ENCODE measurements at regions of chr7 and their contacts with region 1.

Region 1: DNA sequence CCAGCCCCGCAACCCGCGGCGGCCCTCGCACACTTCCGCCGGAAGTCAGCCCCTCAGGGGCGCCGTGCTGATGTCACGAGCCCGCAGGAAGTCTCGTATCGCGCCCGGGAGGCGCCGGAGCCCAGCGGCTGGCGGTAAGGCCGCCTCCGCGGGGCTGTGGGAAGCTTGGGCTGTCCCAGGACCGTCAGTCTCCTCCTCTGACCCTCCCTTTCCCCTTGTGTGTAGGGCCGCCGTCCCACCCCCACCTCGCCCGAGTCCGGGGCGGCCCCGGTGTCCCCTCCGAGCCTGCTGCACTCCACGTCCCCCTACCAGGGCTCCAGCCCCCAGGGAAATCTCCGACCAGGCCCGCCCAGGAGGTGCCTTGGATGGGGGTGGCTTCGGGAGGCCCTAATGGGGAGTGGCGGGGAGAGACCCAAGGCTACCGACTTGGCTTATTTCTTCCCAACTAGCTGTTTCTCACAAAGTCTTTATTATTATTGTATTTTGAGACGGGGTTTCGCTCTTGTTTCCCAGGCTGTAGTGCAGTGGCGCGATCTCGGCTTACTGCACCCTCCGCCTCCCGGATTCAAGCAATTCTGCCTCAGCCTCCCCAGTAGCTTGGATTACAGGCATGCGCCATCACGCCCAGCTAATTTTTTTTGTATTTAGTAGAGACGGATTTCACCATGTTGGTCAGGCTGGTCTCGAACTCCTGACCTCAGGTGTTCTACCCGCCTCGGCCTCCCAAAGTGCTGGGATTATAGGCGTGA is at the start of gene ZDHHC4:
- DNase-seq: peak; percentile 92
- ATAC-seq: peak; percentile 97
- H3K4me3 Mint-ChIP-seq: peak within 1 kb of the TSS; percentile 85
- H3K27ac Mint-ChIP-seq: peak within 1 kb of the TSS; percentile 90
- H3K4me1 Mint-ChIP-seq: peaks cover 51% of the 10 kb centered on the region
- H3K27me3 Mint-ChIP-seq: no peaks in the 10 kb centered on the region
- total RNA-seq, gene ZDHHC4: 29.3 to 35.7 TPM

Region 2: DNA sequence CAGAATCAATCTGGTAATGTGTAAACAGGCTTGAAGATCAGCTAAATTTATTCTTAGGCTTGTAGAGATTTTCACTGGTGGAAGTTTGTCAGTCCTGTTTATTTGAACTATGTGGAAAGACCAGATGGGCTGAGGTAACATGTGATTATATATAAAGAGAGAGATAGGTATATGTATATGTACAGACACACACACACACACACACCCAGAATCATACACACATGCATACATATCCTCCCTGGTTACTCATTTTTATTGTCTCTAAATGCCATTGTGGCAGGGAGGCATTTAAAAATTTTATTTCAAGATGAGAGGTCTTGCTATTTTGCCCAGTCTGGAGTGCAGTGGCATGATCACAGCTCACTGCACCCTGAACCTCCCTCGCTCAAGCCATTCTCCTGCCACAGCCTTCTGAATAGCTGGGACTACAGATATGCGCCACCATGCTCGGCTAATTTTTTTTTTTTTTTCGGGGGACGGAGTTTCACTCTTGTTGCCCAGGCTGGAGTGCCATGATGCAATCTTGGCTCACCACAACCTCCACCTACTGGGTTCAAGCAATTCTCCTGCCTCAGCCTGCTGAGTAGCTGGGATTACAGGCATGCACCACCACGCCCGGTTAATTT is 227.0 kb before region 1 on chr7:
- CTCF ChIA-PET with region 1: no interaction called
- POLR2A ChIA-PET with region 1: no interaction called
- DNase-seq: no peak
- ATAC-seq: no peak
- H3K4me3 Mint-ChIP-seq: no peak overlapping the region
- H3K27ac Mint-ChIP-seq: no peak overlapping the region
- H3K4me1 Mint-ChIP-seq: peaks cover 6% of the 10 kb centered on the region
- H3K27me3 Mint-ChIP-seq: peaks cover 4% of the 10 kb centered on the region

Region 3: DNA sequence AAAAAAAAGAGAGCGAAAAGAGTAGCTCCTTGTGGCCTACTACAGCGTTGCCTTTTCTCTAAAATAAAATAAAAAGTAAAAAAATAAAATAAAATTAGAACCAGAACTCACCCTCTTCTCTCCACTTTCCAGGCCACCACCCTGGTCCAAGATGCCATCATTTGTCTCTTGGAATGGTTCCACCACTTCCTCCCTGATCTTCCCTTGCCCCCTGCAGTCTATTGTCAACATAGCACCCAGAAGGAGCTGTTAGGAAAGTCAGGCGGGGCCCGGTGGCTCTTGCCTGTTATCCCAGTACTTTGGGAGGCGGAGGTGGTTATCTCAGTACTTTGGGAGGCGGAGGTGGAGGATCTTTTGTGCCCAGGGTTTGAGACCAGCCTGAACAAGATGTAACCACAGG is 18.7 kb before region 1 on chr7:
- CTCF ChIA-PET with region 1: interaction called, 32 read pairs
- POLR2A ChIA-PET with region 1: interaction called, 5 read pairs
- DNase-seq: peak; percentile 34
- ATAC-seq: no peak
- H3K4me3 Mint-ChIP-seq: no peak overlapping the region
- H3K27ac Mint-ChIP-seq: no peak overlapping the region
- H3K4me1 Mint-ChIP-seq: peaks cover 9% of the 10 kb centered on the region
- H3K27me3 Mint-ChIP-seq: peaks cover 3% of the 10 kb centered on the region

Region 4: GRCh38 chr7:6589829-6590644 is 12.5 kb after region 1 on chr7 and contains the start of gene INTS15:
- CTCF ChIA-PET with region 1: interaction called, 18 read pairs
- POLR2A ChIA-PET with region 1: interaction called, 24 read pairs
- DNase-seq: peak; percentile 81
- ATAC-seq: peak; percentile 94
- H3K4me3 Mint-ChIP-seq: peak within 1 kb of the TSS; percentile 82
- H3K27ac Mint-ChIP-seq: peak within 1 kb of the TSS; percentile 86
- H3K4me1 Mint-ChIP-seq: peaks cover 20% of the 10 kb centered on the region
- H3K27me3 Mint-ChIP-seq: no peaks in the 10 kb centered on the region
- total RNA-seq, gene INTS15: 40.9 to 42.7 TPM

Region 5: GRCh38 chr7:6614953-6615722 is 37.6 kb after region 1 on chr7 and contains the start of gene ZNF853:
- CTCF ChIA-PET with region 1: no interaction called
- POLR2A ChIA-PET with region 1: no interaction called
- DNase-seq: no peak
- ATAC-seq: peak; percentile 49
- H3K4me3 Mint-ChIP-seq: peak within 1 kb of the TSS; percentile 59
- H3K27ac Mint-ChIP-seq: peak within 1 kb of the TSS; percentile 30
- H3K4me1 Mint-ChIP-seq: peaks cover 26% of the 10 kb centered on the region
- H3K27me3 Mint-ChIP-seq: peaks cover 25% of the 10 kb centered on the region
- total RNA-seq, gene ZNF853: 0.78 to 1.0 TPM

Measured in activated CD8-positive, alpha-beta T cell treated with anti-CD3 and anti-CD28 coated beads, Interleukin-2, amount 10 ng/mL, durations not matched to agents 7 days and 5 days (primary cell).